Left ventricle myocardium inferior (tissue), 1 donor: ENCODE measurements at regions of chr6 and their contacts with region 1.

Region 1: DNA sequence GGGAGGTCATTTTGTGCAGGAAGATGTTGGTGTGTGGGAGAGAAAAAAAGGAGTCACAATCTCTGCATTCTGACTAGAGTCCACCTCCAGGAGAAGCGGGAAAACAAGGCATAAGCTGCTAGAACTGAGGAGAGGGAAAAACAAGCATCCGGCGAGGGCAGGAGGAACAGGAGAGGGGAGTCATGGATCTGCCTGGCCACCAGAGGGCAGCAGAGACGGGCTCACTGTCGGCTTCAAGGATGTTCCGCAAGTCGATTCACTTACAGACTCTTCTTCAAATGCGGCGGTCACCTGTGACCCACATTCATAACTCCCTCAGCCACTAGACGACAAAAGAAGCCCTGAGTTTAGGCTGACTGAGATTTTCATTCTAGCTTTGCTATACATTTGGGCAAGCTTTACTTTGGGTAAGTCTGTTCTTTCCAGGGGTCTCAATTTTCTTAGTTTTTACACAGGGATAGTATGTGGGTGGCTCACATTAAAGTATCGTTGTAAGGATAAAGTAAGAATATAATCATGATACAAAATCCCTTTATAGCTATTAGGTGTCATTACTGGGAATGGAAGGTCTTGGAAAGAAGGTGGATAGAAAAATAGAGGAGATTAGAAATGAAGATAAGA is 6.6 kb upstream of the BTNL2 start:
- DNase-seq: peak; percentile 71
- H3K4me3 ChIP-seq: no peak overlapping the region
- H3K27ac ChIP-seq: no peak overlapping the region
- H3K4me1 ChIP-seq: peaks cover 5% of the 10 kb centered on the region
- H3K27me3 ChIP-seq: peaks cover 84% of the 10 kb centered on the region
- CTCF ChIP-seq: peak; percentile 97

Region 2: DNA sequence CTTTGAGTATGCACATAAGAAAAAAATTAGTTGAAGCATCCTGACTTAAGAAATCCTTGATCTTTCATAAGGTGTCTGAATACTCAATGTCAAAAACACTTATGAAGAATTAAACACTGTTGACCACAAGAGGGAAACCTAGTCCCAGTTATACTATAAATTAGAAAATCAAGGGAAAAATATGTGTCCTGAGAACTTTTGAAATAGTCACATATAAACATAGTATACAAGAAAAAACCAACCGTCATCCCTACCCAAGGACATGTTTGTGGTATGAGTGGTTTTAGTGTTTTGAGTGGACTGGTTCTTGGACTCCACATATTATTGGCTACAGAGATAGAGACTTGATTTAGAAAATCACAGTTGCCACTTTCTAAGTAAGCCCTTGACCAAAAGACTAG is 18.5 kb after region 1 on chr6:
- intact Hi-C with region 1: no loop called
- DNase-seq: no peak
- H3K4me3 ChIP-seq: no peak overlapping the region
- H3K27ac ChIP-seq: no peak overlapping the region
- H3K4me1 ChIP-seq: no peaks in the 10 kb centered on the region
- H3K27me3 ChIP-seq: peaks cover 17% of the 10 kb centered on the region
- CTCF ChIP-seq: peak; percentile 55

Region 3: DNA sequence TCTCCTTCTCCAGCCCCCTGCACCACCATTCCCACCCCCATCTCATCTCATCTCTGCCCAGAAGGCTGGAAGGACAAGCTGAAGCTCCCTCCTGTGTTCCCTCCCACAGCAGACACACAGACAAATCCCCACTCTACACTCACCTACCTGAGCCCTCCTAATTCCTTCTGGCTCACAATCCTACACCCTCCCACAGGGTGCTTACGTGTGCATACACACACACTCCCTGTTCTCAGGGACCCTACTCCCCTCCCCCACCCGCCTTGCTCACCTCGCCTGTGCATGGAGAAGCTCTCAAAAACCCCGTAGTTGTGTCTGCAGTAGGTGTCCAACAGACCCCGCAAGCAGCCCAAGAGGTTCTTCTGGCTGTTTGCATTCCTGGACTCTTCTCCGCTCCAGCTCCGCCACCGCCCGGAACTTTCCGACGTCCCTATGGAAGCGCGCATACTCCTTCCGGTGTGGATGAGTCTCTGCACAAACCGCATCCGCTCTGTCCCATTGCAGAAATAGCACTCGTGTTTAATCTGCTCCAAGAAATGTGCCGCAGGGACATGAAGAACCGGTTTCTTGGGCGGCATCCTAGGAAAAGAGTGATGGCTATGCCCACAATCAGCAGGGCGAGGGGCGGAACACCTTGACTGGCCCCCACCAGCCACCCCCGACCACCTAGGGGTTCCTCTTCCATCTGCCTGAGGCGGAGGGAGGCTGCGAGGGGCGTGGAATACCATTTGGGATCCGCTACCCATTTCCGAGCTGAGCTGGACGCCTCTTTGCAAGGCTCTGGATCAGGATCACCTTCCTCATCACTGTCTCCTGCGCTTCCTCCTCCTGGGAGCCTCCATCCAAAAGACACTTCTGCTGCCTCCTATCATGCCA is 46.2 kb after region 1 on chr6:
- intact Hi-C with region 1: no loop called
- DNase-seq: no peak
- H3K4me3 ChIP-seq: peak overlapping the region; percentile 54
- H3K27ac ChIP-seq: no peak overlapping the region
- H3K4me1 ChIP-seq: no peaks in the 10 kb centered on the region
- H3K27me3 ChIP-seq: peaks cover 25% of the 10 kb centered on the region
- CTCF ChIP-seq: no peak

Region 4: GRCh38 chr6:32785781-32786533 is 372.4 kb after region 1 on chr6:
- intact Hi-C with region 1: loop called (anchors 5 kb)
- DNase-seq: no peak
- H3K4me3 ChIP-seq: no peak overlapping the region
- H3K27ac ChIP-seq: no peak overlapping the region
- H3K4me1 ChIP-seq: no peaks in the 10 kb centered on the region
- H3K27me3 ChIP-seq: peaks cover 47% of the 10 kb centered on the region
- CTCF ChIP-seq: peak; percentile 64

Region 5: DNA sequence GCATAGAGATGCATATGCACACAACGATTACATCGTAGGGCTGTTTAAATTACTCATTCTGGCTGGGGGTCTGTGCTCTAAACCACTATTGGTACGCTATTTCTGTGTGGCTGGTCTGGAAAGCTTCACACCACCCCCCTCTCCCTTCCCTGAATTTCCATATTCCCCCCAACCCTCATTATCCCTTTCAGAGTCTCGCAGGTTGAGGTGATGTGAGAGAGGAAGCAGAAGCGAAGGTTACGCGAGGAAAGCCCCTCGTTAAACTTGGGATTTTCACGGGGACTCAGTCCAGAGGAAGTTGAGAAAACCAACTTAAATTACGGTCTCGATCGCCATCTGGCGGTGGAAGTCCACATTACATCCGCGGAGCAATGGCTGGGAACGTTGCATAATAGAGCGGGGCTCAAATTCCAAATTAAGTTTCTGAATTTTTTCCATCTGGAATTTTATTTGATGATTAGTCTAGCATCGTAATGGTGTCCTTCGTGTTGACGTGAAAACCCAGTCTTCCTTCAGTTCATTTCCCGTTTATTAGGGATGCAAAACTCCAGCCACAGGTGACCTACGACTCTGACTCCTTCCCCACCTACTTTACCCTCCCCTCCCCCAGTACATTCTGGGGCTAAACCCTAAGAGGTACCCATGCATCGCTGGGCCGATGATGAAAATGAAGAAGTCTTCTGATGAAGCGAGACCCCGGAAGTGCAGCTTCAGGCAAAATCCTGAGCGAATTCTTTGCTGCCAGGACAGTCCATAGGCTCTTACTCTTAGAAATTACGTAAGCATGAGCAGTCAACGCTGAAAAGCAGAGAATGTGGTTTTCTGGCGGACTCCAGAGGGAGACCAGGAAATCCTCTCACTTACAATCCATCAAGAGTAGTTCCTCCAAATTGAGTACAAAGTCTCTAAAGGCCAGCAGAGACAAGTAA is 383.6 kb after region 1 on chr6:
- intact Hi-C with region 1: loop called (anchors 5 kb)
- DNase-seq: peak; percentile 72
- H3K4me3 ChIP-seq: peak overlapping the region; percentile 36
- H3K27ac ChIP-seq: no peak overlapping the region
- H3K4me1 ChIP-seq: no peaks in the 10 kb centered on the region
- H3K27me3 ChIP-seq: peaks cover 97% of the 10 kb centered on the region
- CTCF ChIP-seq: peak; percentile 91